Mammary epithelial cell (primary cell): ENCODE measurements at regions of chr11 and their contacts with region 1.

Region 1: GRCh38 chr11:64358907-64359711 is at the start of gene RPS6KA4:
- DNase-seq: peak; percentile 71
- H3K4me3 ChIP-seq: peak within 1 kb of the TSS; percentile 61 to 97 (median 93)
- H3K27ac ChIP-seq: peak within 1 kb of the TSS; percentile 55
- H3K4me1 ChIP-seq: peaks cover 47% of the 10 kb centered on the region
- H3K27me3 ChIP-seq: no peaks in the 10 kb centered on the region
- CTCF ChIP-seq: no peak
- total RNA-seq, gene RPS6KA4: 45.0 to 92.1 TPM

Region 2: DNA sequence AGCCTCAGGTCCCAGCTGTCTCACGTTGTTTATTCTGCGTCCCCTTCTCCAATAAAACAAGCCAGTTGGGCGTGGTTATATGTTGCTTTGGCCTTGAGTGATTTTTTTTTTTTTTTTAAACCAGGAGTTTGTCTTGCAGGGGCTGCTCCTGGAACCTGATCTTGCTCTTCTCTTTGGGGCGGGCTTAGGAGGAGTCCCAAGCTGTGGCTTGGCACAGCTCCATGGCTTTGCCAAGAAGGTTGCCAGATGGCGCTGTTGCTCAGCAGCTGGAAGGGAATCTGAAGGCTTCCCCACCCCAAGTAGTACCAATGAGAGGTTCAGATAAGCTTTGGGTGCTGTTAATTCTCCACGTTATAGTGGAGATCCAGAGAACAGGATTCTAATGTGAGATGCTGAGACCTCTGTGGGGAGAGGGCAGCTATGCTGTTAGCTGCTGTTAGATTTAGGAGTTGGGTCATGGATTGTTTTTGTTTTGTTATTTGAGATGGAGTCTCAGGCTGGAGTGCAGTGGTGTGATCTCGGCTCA is 154.6 kb before region 1 on chr11:
- CTCF ChIA-PET with region 1: no interaction called
- dilution Hi-C with region 1: no loop called
- in situ Hi-C with region 1: no loop called
- intact Hi-C with region 1: loop called (anchors 5 kb)
- DNase-seq: peak; percentile 81
- H3K4me3 ChIP-seq: no peak overlapping the region
- H3K27ac ChIP-seq: no peak overlapping the region
- H3K4me1 ChIP-seq: peaks cover 5% of the 10 kb centered on the region
- H3K27me3 ChIP-seq: no peaks in the 10 kb centered on the region
- CTCF ChIP-seq: peak; percentile 80 to 91

Region 3: GRCh38 chr11:64246871-64247728 is 112.0 kb before region 1 on chr11 and contains the start of gene PPP1R14B:
- CTCF ChIA-PET with region 1: no interaction called
- dilution Hi-C with region 1: no loop called
- in situ Hi-C with region 1: no loop called
- intact Hi-C with region 1: loop called (anchors 5 kb)
- DNase-seq: peak; percentile 81
- H3K4me3 ChIP-seq: peak within 1 kb of the TSS; percentile 79 to 84 (median 82)
- H3K27ac ChIP-seq: peak within 1 kb of the TSS; percentile 77
- H3K4me1 ChIP-seq: peaks cover 41% of the 10 kb centered on the region
- H3K27me3 ChIP-seq: no peaks in the 10 kb centered on the region
- CTCF ChIP-seq: peak in 1 of 2 donors; percentile 15
- total RNA-seq, gene PPP1R14B: 118 to 362 TPM

Region 4: GRCh38 chr11:64317957-64318693 is 41.0 kb before region 1 on chr11 and contains the start of gene PRDX5:
- CTCF ChIA-PET with region 1: interaction called, 15 read pairs
- dilution Hi-C with region 1: no loop called
- in situ Hi-C with region 1: no loop called
- intact Hi-C with region 1: loop called (anchors 1 kb)
- DNase-seq: peak; percentile 95
- H3K4me3 ChIP-seq: peak within 1 kb of the TSS; percentile 77 to 91 (median 79)
- H3K27ac ChIP-seq: peak within 1 kb of the TSS; percentile 95
- H3K4me1 ChIP-seq: peaks cover 41% of the 10 kb centered on the region
- H3K27me3 ChIP-seq: no peaks in the 10 kb centered on the region
- CTCF ChIP-seq: peak; percentile 5 to 62
- total RNA-seq, gene PRDX5: 333 to 449 TPM

Region 5: GRCh38 chr11:64436000-64436399 is 76.9 kb after region 1 on chr11:
- CTCF ChIA-PET with region 1: no interaction called
- dilution Hi-C with region 1: no loop called
- in situ Hi-C with region 1: no loop called
- intact Hi-C with region 1: loop called (anchors 5 kb)
- DNase-seq: peak; percentile 43
- H3K4me3 ChIP-seq: no peak overlapping the region
- H3K27ac ChIP-seq: no peak overlapping the region
- H3K4me1 ChIP-seq: peaks cover 31% of the 10 kb centered on the region
- H3K27me3 ChIP-seq: peaks cover under 1% of the 10 kb centered on the region
- CTCF ChIP-seq: no peak